ENCODE measurements at regions of chr2 and their contacts with region 1.

Region 1: GRCh38 chr2:169900686-169901085 is 73.4 kb downstream of the UBR3 start:
- DNase-seq: no peak
- ATAC-seq: no peak
- H3K4me3 ChIP-seq: no peak overlapping the region
- H3K27ac ChIP-seq: no peak overlapping the region
- H3K4me1 ChIP-seq: no peaks in the 10 kb centered on the region
- H3K27me3 ChIP-seq: no peaks in the 10 kb centered on the region
- CTCF ChIP-seq: no peak
- EP300 ChIP-seq: no peak
- POLR2A ChIP-seq: no peak
- RAD21 ChIP-seq: no peak

Region 2: DNA sequence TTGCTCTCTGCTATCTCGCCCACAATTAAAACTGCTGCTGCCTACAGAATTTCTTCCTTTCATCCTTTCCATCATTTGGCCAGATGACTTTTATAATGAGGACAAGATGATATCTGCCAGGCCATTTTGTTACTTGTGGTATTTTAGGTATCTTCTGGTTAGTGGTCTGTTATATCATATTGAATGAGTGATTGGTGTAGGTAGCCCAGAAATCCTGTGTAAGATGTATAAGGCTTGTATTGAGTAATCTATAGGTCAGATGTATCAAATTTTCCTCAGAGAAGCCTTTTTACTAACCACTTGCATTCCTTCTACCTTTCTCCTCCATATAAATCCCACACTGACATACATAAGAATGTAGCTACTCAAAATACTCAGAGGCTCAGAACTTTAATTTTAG is 44.8 kb after region 1 on chr2:
- CTCF ChIA-PET with region 1: no interaction called
- POLR2A ChIA-PET with region 1: no interaction called
- in situ Hi-C with region 1: no loop called
- intact Hi-C with region 1: loop called (anchors 1 kb)
- DNase-seq: no peak
- ATAC-seq: no peak
- H3K4me3 ChIP-seq: no peak overlapping the region
- H3K27ac ChIP-seq: no peak overlapping the region
- H3K4me1 ChIP-seq: no peaks in the 10 kb centered on the region
- H3K27me3 ChIP-seq: no peaks in the 10 kb centered on the region
- CTCF ChIP-seq: no peak
- EP300 ChIP-seq: no peak
- POLR2A ChIP-seq: no peak
- RAD21 ChIP-seq: no peak

Region 3: DNA sequence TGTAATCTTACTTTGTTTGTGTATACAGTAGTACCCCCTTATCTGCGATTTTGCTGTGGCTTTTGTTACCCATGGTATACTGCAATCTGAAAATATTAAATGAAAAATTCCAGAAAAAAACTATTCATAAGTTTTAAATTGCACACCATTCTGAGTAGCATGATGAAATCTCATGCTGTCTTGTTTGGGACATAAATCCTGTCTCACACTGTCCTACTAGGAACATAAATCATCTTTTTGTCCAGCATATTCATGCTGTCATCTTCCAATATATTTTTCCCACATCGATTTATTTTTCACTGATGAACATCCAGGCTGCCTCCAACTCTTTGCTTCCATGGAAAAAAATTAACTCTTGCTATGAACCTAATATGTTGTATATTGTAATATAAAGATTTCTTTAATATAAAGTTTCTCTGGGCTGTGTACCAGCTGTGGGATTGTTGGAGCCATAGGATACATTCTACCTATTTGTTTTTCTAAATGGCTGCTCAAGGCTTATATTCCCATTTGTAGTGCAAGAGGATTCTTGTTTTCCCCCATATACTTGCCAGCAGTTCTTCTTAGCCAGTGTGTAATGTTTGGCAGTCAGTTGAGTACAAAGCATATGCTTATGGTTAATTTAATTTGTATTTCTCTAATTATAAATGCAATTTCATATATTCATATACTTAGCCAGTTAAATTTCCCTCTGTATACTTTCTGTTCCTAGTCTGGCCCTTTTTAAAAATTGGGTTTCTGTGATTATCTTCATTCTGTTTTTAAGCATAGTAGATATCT is 163.0 kb after region 1 on chr2:
- CTCF ChIA-PET with region 1: no interaction called
- POLR2A ChIA-PET with region 1: no interaction called
- in situ Hi-C with region 1: no loop called
- intact Hi-C with region 1: no loop called
- DNase-seq: no peak
- ATAC-seq: no peak
- H3K4me3 ChIP-seq: no peak overlapping the region
- H3K27ac ChIP-seq: no peak overlapping the region
- H3K4me1 ChIP-seq: no peaks in the 10 kb centered on the region
- H3K27me3 ChIP-seq: no peaks in the 10 kb centered on the region
- CTCF ChIP-seq: no peak
- EP300 ChIP-seq: no peak
- POLR2A ChIP-seq: no peak
- RAD21 ChIP-seq: no peak

Region 4: DNA sequence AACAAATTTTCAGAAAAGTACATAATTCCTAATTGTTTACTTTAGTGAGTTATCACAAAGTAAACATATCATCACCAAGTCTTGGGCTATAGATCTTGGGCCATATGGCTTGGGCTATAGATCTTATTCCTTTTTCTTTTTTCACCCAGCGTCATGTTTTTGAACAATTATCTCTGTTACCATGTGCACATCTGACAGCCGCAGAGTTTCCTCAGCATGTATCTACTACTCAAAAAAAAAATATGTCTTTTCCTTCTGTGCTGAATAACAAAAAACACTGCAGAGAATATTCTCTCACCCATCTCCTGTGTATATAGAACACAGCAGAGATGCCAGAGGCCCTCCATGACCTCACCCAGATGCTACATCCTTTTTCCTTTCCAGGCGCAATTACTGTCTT is 201.1 kb after region 1 on chr2:
- CTCF ChIA-PET with region 1: no interaction called
- POLR2A ChIA-PET with region 1: no interaction called
- in situ Hi-C with region 1: no loop called
- intact Hi-C with region 1: no loop called
- DNase-seq: no peak
- ATAC-seq: no peak
- H3K4me3 ChIP-seq: no peak overlapping the region
- H3K27ac ChIP-seq: no peak overlapping the region
- H3K4me1 ChIP-seq: no peaks in the 10 kb centered on the region
- H3K27me3 ChIP-seq: peaks cover 0 to 3% of the 10 kb centered on the region in 2 experiments; a peak in 2 of 5 replicates
- CTCF ChIP-seq: no peak
- EP300 ChIP-seq: no peak
- POLR2A ChIP-seq: no peak
- RAD21 ChIP-seq: no peak